ENCODE measurements at regions of chr5 and their contacts with region 1.

Region 1: GRCh38 chr5:53430261-53431252 is 49.9 kb upstream of the FST start:
- DNase-seq: peak; percentile 73
- H3K27ac ChIP-seq: no peak overlapping the region
- CTCF ChIP-seq: peak; percentile 79

Region 2: DNA sequence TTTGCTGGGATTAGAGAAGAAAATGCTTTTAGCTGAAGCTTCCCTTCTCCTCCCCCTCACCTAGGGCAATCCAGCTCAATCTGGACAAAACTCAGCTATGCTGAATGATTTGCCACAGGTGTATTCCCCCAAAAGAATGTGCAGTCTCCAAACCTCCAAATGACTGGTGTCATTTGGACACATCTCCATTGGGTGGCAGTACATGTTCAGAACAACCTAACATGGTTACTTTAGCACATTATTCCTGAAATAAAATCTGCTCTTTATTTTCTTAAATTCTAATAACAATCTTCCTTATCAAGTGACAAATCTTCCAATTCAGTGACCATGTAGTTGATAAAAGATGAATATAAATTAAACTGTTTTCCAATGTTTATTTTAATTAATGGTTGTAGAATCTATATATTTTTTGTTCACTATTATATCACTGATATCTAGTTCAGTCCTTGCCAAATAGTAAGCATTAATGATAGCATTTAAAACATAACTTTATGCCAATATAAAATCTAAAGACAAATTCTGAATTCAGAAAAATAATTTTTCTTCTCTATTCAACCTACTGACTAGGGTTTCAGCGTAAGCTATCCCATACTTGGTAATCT is 259.7 kb before region 1 on chr5:
- CTCF ChIA-PET with region 1: interaction called, 14 read pairs
- POLR2A ChIA-PET with region 1: no interaction called
- DNase-seq: peak; percentile 73
- H3K27ac ChIP-seq: no peak overlapping the region
- CTCF ChIP-seq: peak; percentile 90

Region 3: DNA sequence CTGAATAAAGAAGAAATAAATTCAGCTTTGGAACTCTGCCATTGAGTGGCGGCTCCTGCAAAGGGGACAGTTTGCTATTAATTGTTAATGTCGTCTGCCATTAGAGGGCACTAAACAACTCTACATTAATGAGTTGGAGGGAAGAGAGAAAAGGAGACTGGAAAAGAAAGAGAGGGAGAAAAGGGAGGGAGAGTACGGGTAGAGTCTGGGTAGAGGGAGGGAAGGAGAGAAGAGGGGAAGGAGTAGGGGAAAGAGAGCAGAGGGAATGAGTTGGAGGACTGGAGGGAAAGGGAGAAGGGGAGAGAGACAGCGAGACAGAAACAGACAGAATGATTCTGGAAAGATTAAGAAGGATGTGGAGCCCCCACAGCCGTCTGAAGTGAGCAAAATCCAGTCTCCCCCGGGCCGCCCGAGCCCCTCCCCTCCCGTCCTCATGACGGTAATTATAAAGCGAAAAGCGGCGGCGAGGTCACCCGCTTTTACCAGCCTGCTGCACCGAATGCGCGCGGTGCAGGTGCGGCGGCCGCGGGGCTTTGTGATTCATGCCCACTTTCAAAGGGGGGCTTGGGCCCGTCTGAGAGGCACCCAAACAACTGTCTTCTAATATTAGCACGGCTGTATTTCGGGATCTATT is 48.0 kb after region 1 on chr5:
- CTCF ChIA-PET with region 1: no interaction called
- POLR2A ChIA-PET with region 1: interaction called, 10 read pairs
- DNase-seq: peak; percentile 64
- H3K27ac ChIP-seq: peak overlapping the region; percentile 97
- CTCF ChIP-seq: peak; percentile 83

Measured in RWPE1 (cell line).